Activated CD4-positive, alpha-beta memory T cell treated with anti-CD3 and anti-CD28 coated beads for 36 hours (primary cell): ENCODE measurements at regions of chr1 and their contacts with region 1.

Region 1: DNA sequence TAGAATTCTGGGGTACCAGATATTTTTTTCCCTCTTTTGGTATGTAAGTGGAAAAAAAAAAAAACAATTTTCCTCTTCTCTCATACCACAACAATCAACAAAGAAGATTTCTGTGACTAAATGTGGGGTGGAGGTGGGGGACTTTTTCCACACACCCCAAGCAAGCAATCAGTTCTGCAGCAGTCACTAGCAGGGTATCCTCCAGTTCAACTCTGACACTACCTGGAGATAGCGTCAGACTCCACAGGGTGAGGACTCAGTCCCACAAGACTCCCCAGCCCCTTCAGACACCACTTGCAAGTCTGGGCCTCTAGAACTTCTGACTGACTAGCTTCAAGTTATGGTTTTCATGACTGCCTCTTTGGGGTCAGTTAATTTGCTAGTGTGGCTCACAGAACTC is 6.2 kb downstream of the DHX9 start:
- DNase-seq: peak; percentile 41
- H3K4me3 Mint-ChIP-seq: no peak overlapping the region
- H3K27ac Mint-ChIP-seq: peak overlapping the region; percentile 72
- H3K4me1 Mint-ChIP-seq: peaks cover 92% of the 10 kb centered on the region
- H3K27me3 Mint-ChIP-seq: no peaks in the 10 kb centered on the region

Region 2: GRCh38 chr1:182861994-182862393 is 16.6 kb after region 1 on chr1:
- CTCF ChIA-PET with region 1: no interaction called
- POLR2A ChIA-PET with region 1: no interaction called
- intact Hi-C with region 1: loop called (anchors 2 kb)
- DNase-seq: no peak
- H3K4me3 Mint-ChIP-seq: no peak overlapping the region
- H3K27ac Mint-ChIP-seq: peak overlapping the region; percentile 65
- H3K4me1 Mint-ChIP-seq: peaks cover 49% of the 10 kb centered on the region
- H3K27me3 Mint-ChIP-seq: no peaks in the 10 kb centered on the region

Region 3: DNA sequence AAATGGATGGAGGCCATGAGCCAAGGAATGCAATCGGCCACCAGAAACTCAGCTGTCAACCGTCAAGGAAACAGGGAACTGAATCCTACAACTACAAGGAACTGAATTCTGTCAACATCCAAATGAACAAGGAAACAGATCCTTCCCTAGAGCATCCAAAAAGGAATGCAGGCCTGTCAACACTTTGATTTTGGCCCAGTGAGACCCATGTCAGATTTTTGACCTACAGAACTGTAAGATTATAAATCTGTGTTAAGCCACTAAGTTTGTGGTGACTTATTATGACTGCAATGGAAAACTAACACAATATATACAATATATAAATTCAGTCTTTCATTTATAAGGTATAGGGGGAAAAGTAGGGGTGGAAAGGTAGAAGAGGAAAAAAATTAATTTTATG is 52.3 kb after region 1 on chr1:
- CTCF ChIA-PET with region 1: no interaction called
- POLR2A ChIA-PET with region 1: no interaction called
- intact Hi-C with region 1: no loop called
- DNase-seq: no peak
- H3K4me3 Mint-ChIP-seq: no peak overlapping the region
- H3K27ac Mint-ChIP-seq: no peak overlapping the region
- H3K4me1 Mint-ChIP-seq: no peaks in the 10 kb centered on the region
- H3K27me3 Mint-ChIP-seq: no peaks in the 10 kb centered on the region